ENCODE measurements at regions of chr17 and their contacts with region 1.

Region 1: DNA sequence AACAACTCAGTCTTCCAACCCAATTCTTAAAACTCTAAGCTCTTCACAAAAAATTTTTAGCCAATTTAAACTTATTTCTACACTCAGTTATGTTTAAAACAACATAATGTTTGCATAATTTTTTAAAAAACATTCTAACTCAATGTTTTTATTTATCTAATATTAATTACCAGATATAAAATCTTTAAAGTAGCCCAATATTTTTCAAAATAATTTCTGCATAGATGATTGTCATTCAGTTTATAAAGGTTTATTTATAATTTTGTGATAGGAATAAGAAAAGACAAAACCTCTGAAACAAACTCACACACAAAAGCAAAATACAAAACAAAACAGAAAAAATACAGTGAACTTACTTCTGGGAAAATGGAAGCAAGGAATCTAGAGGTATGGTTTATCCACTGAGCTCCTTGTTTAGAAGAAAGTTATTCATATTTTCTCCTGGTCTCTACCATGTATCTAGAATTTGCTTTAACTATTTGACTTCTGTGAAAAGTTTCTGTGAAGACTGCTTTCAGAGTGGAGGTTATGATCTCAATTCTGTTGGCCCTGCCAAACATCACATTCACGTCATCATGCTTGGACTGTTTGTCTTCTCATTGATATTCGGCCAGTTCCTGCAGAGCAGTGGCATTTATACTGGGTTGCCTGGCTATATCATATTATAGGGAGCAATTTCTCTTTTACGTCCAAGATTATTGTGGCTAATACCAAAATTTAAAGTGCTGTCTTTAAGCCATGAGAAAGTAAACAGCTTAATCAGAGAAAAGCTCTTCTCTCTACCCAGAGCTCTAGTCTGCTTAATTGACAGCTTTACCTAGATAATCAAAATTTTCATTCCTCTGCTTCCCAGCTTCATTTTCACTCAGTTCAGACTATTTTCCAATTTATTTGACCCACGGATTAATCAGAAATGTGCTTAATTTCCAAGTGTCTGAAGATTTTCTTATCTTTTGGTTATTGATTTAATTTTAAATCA is at the start of gene ABCA8:
- DNase-seq: no peak
- ATAC-seq: peak; percentile 80
- total RNA-seq, gene ABCA8: 60.3 TPM

Region 2: DNA sequence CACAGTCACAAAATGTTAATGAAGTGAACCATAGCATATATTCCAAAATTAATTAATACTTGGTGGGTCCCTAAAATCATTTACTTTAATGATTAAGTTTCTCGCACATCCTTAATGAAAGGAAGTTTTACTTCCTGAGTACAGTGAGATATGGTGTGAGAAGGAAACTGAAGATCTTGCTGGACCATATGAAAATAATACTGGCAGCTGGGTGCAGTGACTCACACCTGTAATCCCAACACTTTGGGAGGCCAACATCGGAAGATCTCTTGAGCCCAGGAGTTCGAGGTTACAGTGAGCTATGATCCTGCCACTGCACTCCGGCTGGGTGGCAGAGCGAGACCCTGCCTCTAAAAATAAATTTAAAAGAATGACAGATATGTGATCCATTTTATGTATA is 62.5 kb before region 1 on chr17:
- intact Hi-C with region 1: no loop called
- DNase-seq: no peak
- ATAC-seq: no peak

Region 3: GRCh38 chr17:69235338-69235930 is 280.3 kb after region 1 on chr17:
- intact Hi-C with region 1: loop called (anchors 10 kb)
- DNase-seq: peak; percentile 78
- ATAC-seq: peak; percentile 94